AG04449 (cell line): ENCODE measurements at regions of chr5 and their contacts with region 1.

Region 1: DNA sequence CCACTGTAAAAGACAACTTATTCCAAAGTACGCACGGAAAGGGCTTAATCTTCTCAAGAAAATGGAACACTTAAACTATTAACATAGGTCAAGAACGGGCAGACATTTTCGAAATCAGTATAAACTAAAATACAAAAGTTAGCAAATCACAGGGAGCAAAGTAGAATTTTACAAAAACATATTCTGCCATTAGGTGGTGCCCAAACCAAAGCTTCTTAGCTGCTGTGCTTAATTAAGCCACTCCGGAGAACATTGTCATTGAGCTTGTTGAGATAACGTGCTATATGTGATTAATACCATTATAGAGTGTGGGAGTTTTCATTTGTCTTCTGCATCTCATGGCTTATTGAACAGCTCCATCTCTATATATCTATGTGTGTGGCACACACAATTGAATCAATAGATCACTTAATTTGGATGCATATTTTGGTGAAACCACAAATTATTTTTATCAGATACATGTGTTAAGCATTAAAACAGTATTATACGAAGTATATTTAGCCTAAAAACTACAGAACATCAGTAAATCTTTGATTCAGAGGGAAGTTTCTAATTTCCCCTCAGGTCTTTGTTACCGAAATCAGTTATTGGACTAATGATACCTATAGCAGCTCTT is 23.4 kb downstream of the UBLCP1 start:
- DNase-seq: no peak
- H3K4me3 ChIP-seq: no peak overlapping the region
- CTCF ChIP-seq: peak; percentile 44

Region 2: GRCh38 chr5:159274676-159275075 is 11.9 kb before region 1 on chr5:
- CTCF ChIA-PET with region 1: interaction called, 15 read pairs
- POLR2A ChIA-PET with region 1: no interaction called
- DNase-seq: no peak
- H3K4me3 ChIP-seq: no peak overlapping the region
- CTCF ChIP-seq: no peak

Region 3: GRCh38 chr5:159316519-159317383 is 30.2 kb after region 1 on chr5:
- CTCF ChIA-PET with region 1: interaction called, 42 read pairs
- POLR2A ChIA-PET with region 1: no interaction called
- DNase-seq: no peak
- H3K4me3 ChIP-seq: no peak overlapping the region
- CTCF ChIP-seq: peak; percentile 72